Naive thymus-derived CD8-positive, alpha-beta T cell (primary cell): ENCODE measurements at regions of chr19 and their contacts with region 1.

Region 1: GRCh38 chr19:38387550-38388348 is at the start of gene GGN:
- DNase-seq: peak; percentile 55 to 85 (median 72)
- ATAC-seq: peak; percentile 74 to 75
- H3K4me3 Mint-ChIP-seq: peak within 1 kb of the TSS; percentile 81 to 97 (median 92)
- H3K27ac Mint-ChIP-seq: peak within 1 kb of the TSS; percentile 20 to 95 (median 82)
- H3K4me1 Mint-ChIP-seq: peaks cover 11 to 23% (median 21%) of the 10 kb centered on the region in 4 donors
- H3K27me3 Mint-ChIP-seq: peaks cover 10 to 44% (median 27%) of the 10 kb centered on the region in 5 donors
- polyA plus RNA-seq, gene GGN: not detected

Region 2: DNA sequence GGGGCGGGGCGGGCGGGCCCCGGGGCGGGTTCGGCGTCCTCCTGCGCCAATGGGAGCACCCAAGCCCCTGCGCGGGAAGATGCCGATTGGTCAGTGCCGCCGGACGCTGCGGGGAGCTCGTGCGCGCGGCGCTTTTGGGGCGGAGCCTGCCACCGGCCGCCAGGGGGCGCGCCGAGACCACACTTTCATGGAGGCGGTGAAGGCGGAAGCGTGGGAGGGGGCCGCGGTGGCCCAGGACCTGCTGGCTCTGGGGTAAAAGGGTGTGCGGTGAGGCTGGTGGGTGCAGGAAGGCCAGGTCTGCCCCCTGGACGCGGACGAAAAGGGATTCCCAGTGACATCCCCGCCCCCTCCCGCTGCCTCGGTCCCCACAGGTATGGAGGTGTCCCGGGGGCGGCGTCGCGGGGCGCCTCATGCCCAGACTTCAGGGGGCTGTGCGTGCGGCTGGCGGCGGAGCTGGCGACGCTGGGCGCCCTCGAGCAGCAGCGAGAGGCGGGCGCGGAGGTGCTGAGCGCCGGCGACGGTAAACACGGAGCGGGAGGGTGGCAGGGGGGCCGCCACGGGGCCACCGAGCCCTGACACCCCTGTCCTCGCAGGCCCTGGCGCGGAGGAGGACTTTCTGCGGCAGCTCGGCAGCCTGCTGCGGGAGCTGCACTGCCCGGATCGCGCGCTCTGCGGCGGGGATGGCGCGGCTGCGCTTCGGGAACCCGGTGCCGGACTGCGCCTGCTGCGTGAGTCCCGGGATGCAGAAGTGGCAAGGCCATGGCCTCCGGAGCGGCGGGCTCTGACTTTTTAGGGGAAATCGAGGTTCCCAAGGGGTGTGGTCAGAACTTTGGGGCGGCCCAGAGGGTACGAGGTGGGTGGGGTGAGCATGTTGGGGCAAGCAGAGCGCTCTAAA is 15.5 kb after region 1 on chr19 and contains the start of gene FAM98C:
- POLR2A ChIA-PET with region 1: interaction called, 19 read pairs
- DNase-seq: peak; percentile 95 to 99 (median 98)
- ATAC-seq: peak; percentile 94 to 95
- H3K4me3 Mint-ChIP-seq: peak within 1 kb of the TSS; percentile 86 to 96 (median 93)
- H3K27ac Mint-ChIP-seq: peak within 1 kb of the TSS; percentile 82 to 98 (median 94)
- H3K4me1 Mint-ChIP-seq: peaks cover 9 to 23% (median 19%) of the 10 kb centered on the region in 4 donors
- H3K27me3 Mint-ChIP-seq: peaks cover 0 to 8% (median 0%) of the 10 kb centered on the region in 5 donors
- polyA plus RNA-seq, gene FAM98C: 12.6 to 15.5 (median 15.4) TPM

Region 3: DNA sequence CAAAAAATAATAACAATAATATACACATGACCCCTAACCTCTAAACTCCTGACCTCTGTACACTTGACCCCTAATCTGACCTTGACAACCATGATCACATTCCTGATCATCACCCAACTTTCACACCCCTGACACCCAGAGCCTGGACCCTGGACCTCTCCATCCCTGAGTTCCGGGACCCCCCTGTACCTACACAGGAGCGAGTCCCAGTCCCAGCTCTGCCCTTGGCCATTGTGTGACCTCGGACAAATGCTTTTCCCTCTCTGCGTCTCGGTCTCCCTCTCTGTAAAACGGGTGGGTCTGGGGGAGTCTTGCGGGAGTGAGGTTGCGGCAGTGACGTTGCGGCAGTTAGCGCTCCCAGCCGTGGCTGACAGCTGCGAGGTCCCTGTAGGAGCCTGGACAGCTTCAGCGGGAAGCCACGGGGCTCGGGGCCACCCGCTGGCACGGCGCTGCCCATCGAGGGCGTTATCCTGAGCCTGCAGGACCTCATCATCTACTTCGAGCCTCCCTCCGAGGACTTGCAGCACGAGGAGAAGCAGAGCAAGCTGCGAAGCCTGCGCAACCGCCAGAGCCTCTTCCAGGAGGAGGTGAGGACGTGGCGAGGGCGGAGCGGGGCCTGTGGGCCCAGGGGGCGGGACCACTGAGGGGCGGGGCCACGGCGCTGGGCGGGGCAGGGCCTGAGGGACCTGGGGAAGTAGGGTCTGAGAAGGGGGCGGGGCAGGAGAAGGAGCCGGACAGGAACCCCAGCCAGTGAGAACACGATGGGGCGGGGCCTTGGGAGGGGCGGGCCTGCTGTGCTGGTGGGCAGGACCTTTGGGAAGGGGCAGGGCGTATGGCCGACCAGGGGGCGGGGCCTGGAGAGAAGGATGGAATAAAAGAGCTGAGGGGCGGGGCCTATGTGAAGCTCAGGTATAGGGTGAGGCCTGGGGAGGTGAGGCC is 64.9 kb after region 1 on chr19:
- POLR2A ChIA-PET with region 1: no interaction called
- DNase-seq: no peak
- ATAC-seq: no peak
- H3K4me3 Mint-ChIP-seq: no peak overlapping the region
- H3K27ac Mint-ChIP-seq: peak overlapping the region in 1 of 10 donors; percentile 62
- H3K4me1 Mint-ChIP-seq: no peaks in the 10 kb centered on the region
- H3K27me3 Mint-ChIP-seq: peaks cover 0 to 11% (median 3%) of the 10 kb centered on the region in 5 donors